H1 (cell line): ENCODE measurements at regions of chr10 and their contacts with region 1.

Region 1: GRCh38 chr10:68720793-68721672 is at the start of gene CCAR1:
- DNase-seq: peak; percentile 89 to 97
- H3K4me3 ChIP-seq: peak within 1 kb of the TSS; percentile 80 to 94 (median 88)
- H3K27ac ChIP-seq: peak within 1 kb of the TSS; percentile 97
- H3K4me1 ChIP-seq: peaks cover 0 to 4% (median 1%) of the 10 kb centered on the region in 4 experiments; a peak in 3 of 7 replicates
- H3K27me3 ChIP-seq: no peaks in the 10 kb centered on the region
- CTCF ChIP-seq: no peak
- EP300 ChIP-seq: peak in 1 of 2 experiments; percentile 36; a peak in 1 of 3 replicates
- POLR2A ChIP-seq: peak; percentile 89 to 94
- RAD21 ChIP-seq: peak in 1 of 2 experiments; percentile 0; a peak in 1 of 4 replicates
- total RNA-seq, gene CCAR1: 111 TPM in 2 replicates

Region 2: GRCh38 chr10:68560186-68560942 is 160.7 kb before region 1 on chr10 and contains the start of gene TET1:
- CTCF ChIA-PET with region 1: no interaction called
- POLR2A ChIA-PET with region 1: interaction called, 10 read pairs
- DNase-seq: peak; percentile 59 to 97
- H3K4me3 ChIP-seq: peak within 1 kb of the TSS; percentile 88 to 98 (median 94)
- H3K27ac ChIP-seq: peak within 1 kb of the TSS; percentile 64; the same call in 1 of the 2 replicates
- H3K4me1 ChIP-seq: peaks cover 0 to 16% (median 3%) of the 10 kb centered on the region in 4 experiments; a peak in 4 of 7 replicates
- H3K27me3 ChIP-seq: no peaks in the 10 kb centered on the region
- CTCF ChIP-seq: no peak
- EP300 ChIP-seq: no peak
- POLR2A ChIP-seq: peak; percentile 81 to 90
- RAD21 ChIP-seq: peak in 1 of 2 experiments; percentile 18; a peak in 1 of 4 replicates
- total RNA-seq, gene TET1: 68.5 and 69.3 TPM in 2 replicates

Region 3: DNA sequence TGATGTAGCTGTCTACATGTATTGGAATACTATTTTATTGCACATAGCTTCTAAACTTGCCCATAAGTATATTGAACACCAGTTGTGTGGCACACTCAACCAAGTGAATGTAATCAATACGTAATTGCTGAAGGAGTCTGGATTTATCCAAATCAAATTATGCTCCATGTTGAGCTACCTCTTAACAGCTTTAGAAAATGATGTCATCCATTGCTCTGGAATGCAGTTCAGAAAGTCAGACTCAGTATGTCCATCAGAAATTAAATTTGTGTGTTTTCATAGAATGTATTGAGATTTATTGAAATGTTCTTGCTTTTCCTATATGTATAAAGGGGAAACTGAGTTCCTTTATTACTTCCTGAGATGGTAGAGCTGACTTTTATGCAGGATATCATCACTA is 25.0 kb before region 1 on chr10:
- CTCF ChIA-PET with region 1: no interaction called
- POLR2A ChIA-PET with region 1: interaction called, 11 read pairs
- DNase-seq: no peak
- H3K4me3 ChIP-seq: no peak overlapping the region
- H3K27ac ChIP-seq: no peak overlapping the region
- H3K4me1 ChIP-seq: no peaks in the 10 kb centered on the region
- H3K27me3 ChIP-seq: no peaks in the 10 kb centered on the region
- CTCF ChIP-seq: no peak
- EP300 ChIP-seq: no peak
- POLR2A ChIP-seq: no peak
- RAD21 ChIP-seq: no peak

Region 4: DNA sequence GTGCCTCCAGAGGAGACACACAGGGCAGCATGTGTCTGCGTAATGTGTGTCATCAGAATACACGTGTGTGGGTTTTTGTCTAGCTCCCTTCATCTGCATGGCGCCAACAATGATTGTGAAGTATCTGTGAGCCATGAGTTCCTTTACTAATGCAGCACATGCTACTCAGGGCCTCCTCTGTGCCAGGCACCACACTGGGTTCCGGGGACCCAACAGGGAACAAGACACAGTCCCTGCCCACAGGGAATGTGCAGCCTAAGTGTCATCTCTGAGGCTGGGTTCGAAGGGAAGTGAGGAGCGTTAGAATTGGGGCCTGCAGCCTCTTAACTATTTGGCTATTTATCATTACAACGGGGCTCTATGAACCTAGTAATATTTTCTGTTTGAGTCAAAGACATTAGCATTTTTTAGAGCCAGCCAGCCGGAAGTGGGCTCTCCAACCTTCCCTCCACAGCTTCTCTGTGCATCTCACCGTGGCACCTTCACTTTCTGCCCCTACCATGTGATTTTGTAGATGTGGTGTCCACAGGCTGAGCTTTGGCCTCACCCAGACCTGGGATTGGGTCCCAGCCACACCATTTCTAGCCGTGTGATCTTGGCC is 323.0 kb after region 1 on chr10:
- CTCF ChIA-PET with region 1: no interaction called
- POLR2A ChIA-PET with region 1: no interaction called
- DNase-seq: no peak
- H3K4me3 ChIP-seq: no peak overlapping the region
- H3K27ac ChIP-seq: no peak overlapping the region
- H3K4me1 ChIP-seq: no peaks in the 10 kb centered on the region
- H3K27me3 ChIP-seq: no peaks in the 10 kb centered on the region
- CTCF ChIP-seq: no peak
- EP300 ChIP-seq: no peak
- POLR2A ChIP-seq: no peak
- RAD21 ChIP-seq: no peak